Activated CD4-positive, alpha-beta memory T cell treated with anti-CD3 and anti-CD28 coated beads for 36 hours (primary cell): ENCODE measurements at regions of chr6 and their contacts with region 1.

Region 1: GRCh38 chr6:41591859-41592502 is 45.8 kb downstream of the FOXP4 start:
- DNase-seq: peak; percentile 86
- H3K4me3 Mint-ChIP-seq: no peak overlapping the region
- H3K27ac Mint-ChIP-seq: no peak overlapping the region
- H3K4me1 Mint-ChIP-seq: no peaks in the 10 kb centered on the region
- H3K27me3 Mint-ChIP-seq: no peaks in the 10 kb centered on the region

Region 2: DNA sequence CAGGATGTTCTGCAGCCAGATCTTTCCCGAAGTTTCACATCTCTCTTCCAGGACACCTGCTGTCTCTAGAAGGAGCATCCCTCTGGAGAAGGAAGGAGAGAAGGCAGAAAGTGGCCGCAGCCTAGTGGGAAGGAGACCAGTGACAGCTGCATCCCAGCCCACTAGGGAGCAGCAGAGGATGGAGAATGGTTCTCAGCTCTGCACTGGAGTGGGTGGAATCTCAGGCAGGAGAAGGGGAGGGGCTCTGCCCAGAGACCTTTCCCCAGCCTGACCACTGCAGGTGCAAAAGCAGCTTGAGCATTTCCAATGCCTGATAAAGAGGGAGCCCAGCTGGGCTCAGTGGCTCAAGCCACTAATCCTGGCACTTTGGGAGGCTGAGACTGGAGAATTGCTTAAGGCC is 224.3 kb before region 1 on chr6:
- CTCF ChIA-PET with region 1: interaction called, 8 read pairs
- POLR2A ChIA-PET with region 1: no interaction called
- intact Hi-C with region 1: loop called (anchors 2 kb)
- DNase-seq: peak; percentile 25
- H3K4me3 Mint-ChIP-seq: no peak overlapping the region
- H3K27ac Mint-ChIP-seq: no peak overlapping the region
- H3K4me1 Mint-ChIP-seq: peaks cover 15% of the 10 kb centered on the region
- H3K27me3 Mint-ChIP-seq: peaks cover 49% of the 10 kb centered on the region

Region 3: GRCh38 chr6:41463062-41463930 is 128.7 kb before region 1 on chr6:
- CTCF ChIA-PET with region 1: interaction called, 52 read pairs
- POLR2A ChIA-PET with region 1: no interaction called
- intact Hi-C with region 1: loop called (anchors 1 kb)
- DNase-seq: peak; percentile 51
- H3K4me3 Mint-ChIP-seq: no peak overlapping the region
- H3K27ac Mint-ChIP-seq: no peak overlapping the region
- H3K4me1 Mint-ChIP-seq: no peaks in the 10 kb centered on the region
- H3K27me3 Mint-ChIP-seq: peaks cover 28% of the 10 kb centered on the region